Activated T-helper 2 cell treated with anti-CD3 and anti-CD28 coated beads, Interferon-gamma antibody, Interleukin-2, Interleukin-4, amounts not matched to agents 10 μg/mL and 5 μg/mL and 100 μg/mL, durations not matched to agents 14 hours and 24 hours and 36 hours (primary cell): ENCODE measurements at regions of chr2 and their contacts with region 1.

Region 1: DNA sequence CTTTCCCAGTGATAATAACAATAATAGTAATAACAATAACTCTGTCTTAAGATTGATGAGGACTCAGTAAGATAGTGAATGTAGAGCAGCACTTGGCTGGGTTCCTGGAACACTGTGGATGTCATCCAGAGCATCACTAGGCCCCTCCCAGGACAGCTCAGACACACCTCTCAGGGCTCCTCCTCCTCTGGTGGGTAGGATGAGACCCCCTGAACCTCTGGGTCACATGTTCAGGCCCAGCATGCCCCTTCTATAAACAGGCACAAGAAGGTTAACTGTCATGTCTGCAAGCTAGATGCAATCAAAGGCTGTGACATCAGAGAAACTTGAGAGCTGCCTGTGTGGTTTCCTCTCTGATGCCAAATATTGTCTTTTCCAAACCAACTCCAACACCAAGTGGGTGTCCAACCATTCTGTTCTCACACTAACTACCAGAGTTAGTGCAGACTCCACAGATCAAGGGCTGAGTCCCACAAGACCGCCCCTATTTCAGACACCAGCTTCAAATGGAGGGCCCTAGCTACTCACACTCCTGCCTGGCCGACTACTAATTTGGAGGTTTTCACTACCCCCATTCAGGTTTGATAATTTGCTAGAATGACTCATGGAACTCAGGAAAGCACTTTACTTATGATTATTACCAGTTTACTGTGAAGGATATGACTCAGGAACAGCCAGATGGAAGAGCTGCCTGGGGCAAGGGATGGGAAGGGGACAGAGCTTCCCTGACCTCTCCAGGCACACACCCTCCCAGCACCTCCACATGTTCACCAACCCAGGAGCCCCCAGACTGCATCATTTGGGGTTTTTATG is 46.4 kb upstream of the BZW1 start:
- DNase-seq: peak; percentile 21
- H3K4me3 Mint-ChIP-seq: peak overlapping the region; percentile 41
- H3K27ac Mint-ChIP-seq: peak overlapping the region; percentile 90
- H3K4me1 Mint-ChIP-seq: peaks cover 35% of the 10 kb centered on the region
- H3K27me3 Mint-ChIP-seq: no peaks in the 10 kb centered on the region

Region 2: GRCh38 chr2:200728630-200729029 is 36.7 kb before region 1 on chr2:
- intact Hi-C with region 1: loop called (anchors 5 kb)
- DNase-seq: no peak
- H3K4me3 Mint-ChIP-seq: no peak overlapping the region
- H3K27ac Mint-ChIP-seq: no peak overlapping the region
- H3K4me1 Mint-ChIP-seq: peaks cover 9% of the 10 kb centered on the region
- H3K27me3 Mint-ChIP-seq: peaks cover 20% of the 10 kb centered on the region

Region 3: DNA sequence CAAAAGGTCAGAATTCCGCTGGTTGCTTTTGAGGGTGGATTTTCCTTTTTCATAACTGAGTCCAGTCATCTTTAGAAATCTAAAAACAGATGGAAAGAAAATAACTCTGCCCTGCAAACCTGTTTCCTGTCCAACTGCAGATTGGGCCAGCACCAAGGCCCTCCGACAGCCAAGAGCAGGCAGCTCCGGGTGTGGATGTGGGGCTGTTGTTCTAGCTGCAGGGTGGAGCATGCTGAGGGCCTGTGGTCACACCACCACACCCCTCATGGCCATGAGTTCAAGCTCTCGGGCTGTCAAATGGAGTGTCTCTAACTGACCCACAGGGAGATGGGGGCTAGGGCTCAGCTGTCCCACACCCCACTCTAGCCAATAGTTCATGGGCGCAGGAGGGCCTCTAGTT is 22.9 kb before region 1 on chr2:
- intact Hi-C with region 1: no loop called
- DNase-seq: no peak
- H3K4me3 Mint-ChIP-seq: no peak overlapping the region
- H3K27ac Mint-ChIP-seq: no peak overlapping the region
- H3K4me1 Mint-ChIP-seq: peaks cover 3% of the 10 kb centered on the region
- H3K27me3 Mint-ChIP-seq: peaks cover 7% of the 10 kb centered on the region

Region 4: GRCh38 chr2:200800458-200800857 is 35.1 kb after region 1 on chr2:
- intact Hi-C with region 1: loop called (anchors 2 kb)
- DNase-seq: no peak
- H3K4me3 Mint-ChIP-seq: no peak overlapping the region
- H3K27ac Mint-ChIP-seq: no peak overlapping the region
- H3K4me1 Mint-ChIP-seq: peaks cover 11% of the 10 kb centered on the region
- H3K27me3 Mint-ChIP-seq: peaks cover 16% of the 10 kb centered on the region

Region 5: DNA sequence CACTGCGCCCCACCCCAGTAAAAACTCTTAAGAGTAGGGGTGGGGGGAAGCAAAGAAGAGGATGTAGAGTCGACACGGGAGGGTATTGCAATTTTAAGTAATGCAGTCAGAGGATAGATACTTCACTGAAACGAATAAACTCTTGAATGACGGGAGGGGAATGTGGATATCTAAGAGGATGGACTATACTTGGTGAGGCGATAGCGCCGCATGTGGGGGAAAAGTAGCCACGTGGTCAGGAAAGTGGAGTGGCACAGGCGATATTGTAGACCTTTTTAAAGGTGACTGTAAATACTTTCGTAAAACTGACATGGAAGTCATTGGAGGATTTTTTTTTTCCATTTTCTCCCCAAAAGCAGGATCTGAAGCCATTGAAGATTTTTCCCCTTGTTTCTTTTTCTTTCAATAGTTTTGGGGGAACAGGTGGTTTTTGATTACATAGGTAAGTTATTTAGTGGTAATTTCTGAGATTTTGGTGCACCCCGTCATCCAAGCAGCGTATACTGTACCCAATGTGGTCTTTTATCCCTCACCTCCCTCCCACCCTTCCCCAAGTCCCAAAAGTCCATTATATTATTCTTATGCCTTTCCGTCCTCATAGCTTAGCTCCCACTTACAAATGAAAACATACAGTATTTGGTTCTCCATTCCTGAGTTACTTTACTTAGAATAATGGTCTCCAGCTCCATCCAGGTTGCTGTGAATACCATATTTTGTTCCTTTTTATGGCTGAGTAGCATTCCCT is 85.3 kb after region 1 on chr2:
- intact Hi-C with region 1: no loop called
- DNase-seq: no peak
- H3K4me3 Mint-ChIP-seq: no peak overlapping the region
- H3K27ac Mint-ChIP-seq: no peak overlapping the region
- H3K4me1 Mint-ChIP-seq: peaks cover 4% of the 10 kb centered on the region
- H3K27me3 Mint-ChIP-seq: no peaks in the 10 kb centered on the region

Region 6: DNA sequence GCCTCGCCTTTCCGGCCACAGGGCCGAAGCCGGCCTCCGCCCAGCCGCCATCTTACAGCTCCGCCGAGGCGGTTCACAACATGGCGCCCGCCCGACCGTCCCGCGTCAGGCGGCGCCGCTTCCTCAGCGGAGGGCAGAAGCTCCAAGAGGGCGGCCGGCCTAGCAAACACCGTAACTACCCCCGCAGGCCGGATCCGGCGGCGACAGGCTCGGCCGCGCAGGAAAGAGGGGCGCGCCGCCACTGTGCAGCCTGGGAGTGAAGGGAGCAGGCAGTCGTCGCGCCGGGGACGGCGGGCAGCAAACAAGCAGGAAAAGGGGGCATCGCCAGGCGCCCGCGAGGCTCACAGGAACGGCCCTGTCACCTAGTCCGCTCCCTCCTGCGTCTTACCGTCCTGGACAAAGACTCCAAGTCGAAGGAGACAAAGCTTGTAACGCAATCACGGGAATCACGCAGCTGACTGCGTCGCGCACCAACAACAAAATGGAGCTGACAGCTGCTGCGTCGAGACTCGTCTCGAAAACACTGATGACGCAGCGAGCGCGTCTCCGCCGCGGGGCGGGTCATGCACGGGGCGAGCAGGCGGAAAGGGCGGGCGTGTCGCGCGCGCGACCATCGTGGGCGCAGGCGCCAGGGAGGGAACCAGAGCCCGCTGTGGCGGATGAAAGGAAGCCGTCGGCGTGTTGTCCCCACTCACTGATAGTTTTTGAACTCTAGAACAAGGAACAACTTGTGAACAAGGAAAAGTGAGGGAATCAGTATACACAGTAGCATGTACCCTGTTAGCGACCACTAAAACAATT is 99.0 kb after region 1 on chr2 and contains the start of gene CLK1:
- intact Hi-C with region 1: loop called (anchors 1 kb)
- DNase-seq: peak; percentile 91
- H3K4me3 Mint-ChIP-seq: peak within 1 kb of the TSS; percentile 93
- H3K27ac Mint-ChIP-seq: peak within 1 kb of the TSS; percentile 94
- H3K4me1 Mint-ChIP-seq: peaks cover 32% of the 10 kb centered on the region
- H3K27me3 Mint-ChIP-seq: no peaks in the 10 kb centered on the region
- total RNA-seq, gene CLK1: 114 and 122 TPM in 2 replicates